MCF 10A (cell line): ENCODE measurements at regions of chr13 and their contacts with region 1.

Region 1: GRCh38 chr13:21913010-21913409 is 242.1 kb downstream of the FGF9 start:
- DNase-seq: no peak
- H3K4me3 Mint-ChIP-seq: no peak overlapping the region
- H3K27ac Mint-ChIP-seq: no peak overlapping the region
- H3K4me1 Mint-ChIP-seq: peaks cover 5% of the 10 kb centered on the region
- H3K27me3 Mint-ChIP-seq: no peaks in the 10 kb centered on the region
- CTCF ChIP-seq: no peak

Region 2: GRCh38 chr13:22103044-22104027 is 190.3 kb after region 1 on chr13:
- CTCF ChIA-PET with region 1: no interaction called
- POLR2A ChIA-PET with region 1: no interaction called
- intact Hi-C with region 1: loop called (anchors 10 kb)
- DNase-seq: no peak
- H3K4me3 Mint-ChIP-seq: no peak overlapping the region
- H3K27ac Mint-ChIP-seq: no peak overlapping the region
- H3K4me1 Mint-ChIP-seq: peaks cover 15% of the 10 kb centered on the region
- H3K27me3 Mint-ChIP-seq: peaks cover 41% of the 10 kb centered on the region
- CTCF ChIP-seq: no peak